ENCODE measurements at regions of chr17 and their contacts with region 1.

Region 1: DNA sequence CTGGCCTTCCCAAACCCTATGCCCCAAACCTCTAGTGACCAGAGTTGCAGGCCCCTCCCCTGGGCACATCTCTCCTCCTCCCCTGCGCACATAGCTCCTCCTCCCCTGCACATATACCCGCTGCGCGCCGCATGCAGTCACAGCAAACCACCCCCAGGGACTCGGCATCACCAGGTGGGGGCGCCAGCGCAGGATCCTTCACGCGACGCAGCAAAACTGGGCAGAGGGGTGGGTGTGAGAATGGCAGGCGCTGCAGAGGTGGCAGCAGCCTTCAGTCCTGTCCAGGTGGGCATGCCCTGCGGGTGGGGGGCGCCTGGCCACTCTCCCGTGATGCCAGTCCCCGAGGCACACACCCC is 5.6 kb downstream of the CORO6 start:
- DNase-seq: no peak
- H3K27ac ChIP-seq: no peak overlapping the region
- CTCF ChIP-seq: peak; percentile 29

Region 2: GRCh38 chr17:29589524-29590410 is 27.3 kb before region 1 on chr17 and contains the start of gene GIT1:
- CTCF ChIA-PET with region 1: interaction called, 45 read pairs
- POLR2A ChIA-PET with region 1: interaction called, 3 read pairs
- DNase-seq: peak; percentile 89
- H3K27ac ChIP-seq: peak within 1 kb of the TSS; percentile 99
- CTCF ChIP-seq: no peak

Region 3: GRCh38 chr17:29664743-29665480 is 47.8 kb after region 1 on chr17:
- CTCF ChIA-PET with region 1: no interaction called
- POLR2A ChIA-PET with region 1: no interaction called
- DNase-seq: peak; percentile 70
- H3K27ac ChIP-seq: no peak overlapping the region
- CTCF ChIP-seq: no peak

Region 4: DNA sequence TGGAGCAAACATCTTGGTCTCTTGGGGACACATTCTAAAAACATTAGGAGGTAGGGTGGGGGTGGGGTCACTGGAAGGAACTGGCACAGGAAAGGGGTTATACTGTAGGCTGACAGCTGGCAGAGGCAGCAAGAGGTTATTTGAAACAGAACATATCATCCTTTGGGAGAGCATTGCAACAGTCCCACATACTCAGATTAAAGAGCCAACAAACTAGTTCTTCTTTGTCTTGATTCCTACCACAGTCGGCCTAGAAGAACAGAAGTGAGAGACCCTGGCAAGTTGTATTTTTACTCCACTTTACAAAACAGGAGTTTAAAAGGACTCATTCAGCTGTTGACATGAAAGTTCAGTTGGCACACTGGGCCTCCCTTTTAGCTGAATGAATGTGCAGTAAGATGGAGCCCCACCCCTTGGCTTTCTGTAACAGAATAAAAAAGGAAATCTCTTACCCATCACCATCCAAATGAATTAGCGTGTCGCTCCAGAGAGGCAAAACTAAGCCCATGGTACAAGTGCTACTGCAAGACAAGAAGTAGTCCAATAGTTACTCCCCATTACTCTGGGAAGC is 60.2 kb after region 1 on chr17:
- CTCF ChIA-PET with region 1: no interaction called
- POLR2A ChIA-PET with region 1: no interaction called
- DNase-seq: no peak
- H3K27ac ChIP-seq: no peak overlapping the region
- CTCF ChIP-seq: no peak

Region 5: DNA sequence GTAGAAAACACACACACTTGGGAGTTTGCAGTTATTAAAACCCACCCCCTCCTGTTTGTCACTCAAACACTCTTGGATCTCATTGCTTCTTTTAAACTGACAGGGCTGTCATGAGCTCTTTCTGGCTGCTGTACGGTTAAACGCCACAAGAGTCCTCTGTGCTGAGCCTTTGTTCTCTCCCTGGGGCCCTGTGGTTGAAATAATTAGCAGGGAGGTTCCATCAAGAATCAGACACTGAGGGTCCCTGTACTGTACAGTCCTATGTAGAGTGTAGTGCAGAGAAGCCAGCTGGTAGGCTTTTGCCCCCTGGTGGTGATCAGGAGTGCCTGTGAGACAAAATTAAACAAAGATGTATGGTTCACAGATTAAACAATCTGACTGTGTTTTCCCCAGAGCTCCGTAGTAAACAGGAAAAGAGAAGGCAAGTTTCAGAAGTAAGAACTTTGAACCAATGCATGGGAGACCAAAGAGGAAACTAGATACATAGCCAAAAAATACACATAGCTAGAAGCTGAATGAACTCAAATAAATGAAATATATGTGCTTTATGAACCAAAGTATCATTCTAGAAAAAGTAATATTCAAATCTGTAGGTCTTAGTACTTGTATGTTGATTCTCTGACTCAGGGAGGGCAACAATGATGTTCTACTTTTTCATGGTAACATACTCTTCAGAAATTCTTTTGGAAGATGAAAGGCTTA is 314.3 kb after region 1 on chr17:
- CTCF ChIA-PET with region 1: interaction called, 10 read pairs
- POLR2A ChIA-PET with region 1: no interaction called
- DNase-seq: peak; percentile 54
- H3K27ac ChIP-seq: no peak overlapping the region
- CTCF ChIP-seq: peak; percentile 93